Activated CD4-positive, alpha-beta memory T cell treated with anti-CD3 and anti-CD28 coated beads for 36 hours (primary cell): ENCODE measurements at regions of chr18 and their contacts with region 1.

Region 1: DNA sequence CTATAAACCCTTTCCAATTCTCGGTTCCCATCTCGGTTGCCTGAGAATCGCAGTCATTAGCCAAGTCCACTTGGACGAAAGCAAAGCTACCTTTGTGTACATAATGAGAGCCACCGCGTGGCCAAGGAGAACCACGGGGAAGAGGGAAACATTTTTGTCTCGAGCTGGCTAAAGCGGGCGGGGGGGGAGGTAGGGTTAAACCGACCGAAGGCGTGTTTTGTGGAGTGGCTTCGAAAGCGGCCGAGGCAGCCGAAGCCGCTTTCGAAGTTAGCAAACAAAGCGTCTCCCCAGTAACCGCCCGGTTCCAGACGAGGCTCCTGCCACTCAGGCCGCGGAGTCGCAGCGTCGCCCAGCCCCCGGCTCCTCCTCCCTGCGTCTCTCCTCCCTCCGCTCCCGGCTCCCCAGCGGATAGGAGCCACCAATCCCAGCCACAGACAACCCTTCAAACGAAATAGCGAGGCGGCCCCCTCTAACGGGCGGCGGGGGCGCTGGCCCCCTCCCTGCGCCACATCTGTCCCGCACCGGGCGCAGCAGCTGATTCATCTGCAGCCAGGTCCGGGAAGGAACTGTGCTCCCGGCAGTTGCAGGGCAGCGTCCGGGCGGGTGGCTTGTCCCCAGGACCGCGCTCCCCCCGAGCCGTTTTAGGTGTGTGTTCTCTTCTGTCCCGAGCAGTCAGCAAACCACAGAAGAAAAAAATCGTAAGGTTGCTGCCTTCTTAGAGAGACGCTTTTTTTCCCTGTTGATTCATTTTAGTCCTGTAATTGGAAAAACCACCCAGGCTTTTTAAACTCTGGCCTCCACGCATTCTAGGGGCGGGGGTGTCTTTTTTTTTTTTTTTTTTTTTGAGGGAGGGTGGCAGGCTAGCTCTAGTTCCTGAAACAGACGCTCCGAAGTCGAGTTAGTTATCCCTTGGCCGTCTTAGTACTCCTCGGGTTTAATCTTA is 1.8 kb upstream of the TGIF1 start:
- DNase-seq: peak; percentile 93
- H3K4me3 Mint-ChIP-seq: peak overlapping the region; percentile 86
- H3K27ac Mint-ChIP-seq: peak overlapping the region; percentile 93
- H3K4me1 Mint-ChIP-seq: peaks cover 25% of the 10 kb centered on the region
- H3K27me3 Mint-ChIP-seq: no peaks in the 10 kb centered on the region

Region 2: DNA sequence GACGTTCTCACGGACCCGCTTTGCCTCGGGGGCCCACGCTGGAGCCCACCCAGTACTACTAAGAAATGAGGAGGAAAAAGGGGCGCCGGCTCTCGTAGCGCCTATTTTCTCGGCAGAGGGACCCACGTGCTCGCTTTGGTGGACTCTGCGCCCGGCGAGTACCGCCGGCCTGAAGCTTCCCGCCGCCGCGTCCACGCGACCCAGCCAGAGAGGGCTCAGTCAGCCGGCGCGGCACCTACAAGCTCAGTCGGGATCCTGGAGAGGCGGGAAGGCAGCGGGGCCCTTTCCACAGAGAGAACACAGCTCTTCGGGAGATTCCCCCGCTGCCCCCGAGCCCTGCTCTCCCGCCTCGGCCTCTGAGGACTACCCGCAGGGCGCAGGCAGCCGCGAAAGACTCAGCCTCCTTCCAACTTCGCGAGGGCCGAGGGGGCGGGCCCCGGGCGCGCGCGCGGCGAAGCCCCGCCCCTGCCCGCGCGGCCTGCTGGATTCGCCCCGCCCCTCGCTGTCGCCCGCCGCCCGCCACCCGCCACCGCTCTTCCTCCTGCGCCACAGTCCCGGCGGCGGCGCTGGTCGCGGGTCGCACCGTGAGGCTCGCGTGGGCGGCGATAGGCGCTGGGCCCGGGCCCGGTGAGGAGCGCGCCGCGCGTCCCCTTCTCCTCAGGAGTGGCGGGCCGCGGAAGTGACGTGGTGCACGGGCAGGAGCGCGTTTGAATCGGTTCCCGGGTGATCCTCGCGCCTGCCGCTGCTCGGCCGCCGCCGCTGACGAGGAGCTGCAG is 792.8 kb before region 1 on chr18 and contains the start of gene SMCHD1:
- CTCF ChIA-PET with region 1: no interaction called
- POLR2A ChIA-PET with region 1: no interaction called
- intact Hi-C with region 1: loop called (anchors 5 kb)
- DNase-seq: peak; percentile 94
- H3K4me3 Mint-ChIP-seq: peak within 1 kb of the TSS; percentile 91
- H3K27ac Mint-ChIP-seq: peak within 1 kb of the TSS; percentile 97
- H3K4me1 Mint-ChIP-seq: peaks cover 29% of the 10 kb centered on the region
- H3K27me3 Mint-ChIP-seq: no peaks in the 10 kb centered on the region
- total RNA-seq, gene SMCHD1: 86.0 to 94.5 TPM

Region 3: GRCh38 chr18:3261371-3262246 is 186.6 kb before region 1 on chr18 and contains the start of gene MYL12B:
- CTCF ChIA-PET with region 1: interaction called, 3 read pairs
- POLR2A ChIA-PET with region 1: no interaction called
- intact Hi-C with region 1: loop called (anchors 1 kb)
- DNase-seq: peak; percentile 85
- H3K4me3 Mint-ChIP-seq: peak within 1 kb of the TSS; percentile 89
- H3K27ac Mint-ChIP-seq: peak within 1 kb of the TSS; percentile 95
- H3K4me1 Mint-ChIP-seq: peaks cover 62% of the 10 kb centered on the region
- H3K27me3 Mint-ChIP-seq: no peaks in the 10 kb centered on the region
- total RNA-seq, gene MYL12B: 335 to 339 TPM

Region 4: GRCh38 chr18:3380384-3380961 is 67.7 kb before region 1 on chr18:
- CTCF ChIA-PET with region 1: interaction called, 33 read pairs
- POLR2A ChIA-PET with region 1: interaction called, 4 read pairs
- intact Hi-C with region 1: loop called (anchors 1 kb)
- DNase-seq: peak; percentile 57
- H3K4me3 Mint-ChIP-seq: no peak overlapping the region
- H3K27ac Mint-ChIP-seq: no peak overlapping the region
- H3K4me1 Mint-ChIP-seq: peaks cover 9% of the 10 kb centered on the region
- H3K27me3 Mint-ChIP-seq: peaks cover 13% of the 10 kb centered on the region

Region 5: GRCh38 chr18:3541549-3542386 is 93.6 kb after region 1 on chr18:
- CTCF ChIA-PET with region 1: no interaction called
- POLR2A ChIA-PET with region 1: interaction called, 4 read pairs
- intact Hi-C with region 1: loop called (anchors 2 kb)
- DNase-seq: peak; percentile 68
- H3K4me3 Mint-ChIP-seq: peak overlapping the region; percentile 8
- H3K27ac Mint-ChIP-seq: peak overlapping the region; percentile 59
- H3K4me1 Mint-ChIP-seq: peaks cover 35% of the 10 kb centered on the region
- H3K27me3 Mint-ChIP-seq: no peaks in the 10 kb centered on the region

Region 6: DNA sequence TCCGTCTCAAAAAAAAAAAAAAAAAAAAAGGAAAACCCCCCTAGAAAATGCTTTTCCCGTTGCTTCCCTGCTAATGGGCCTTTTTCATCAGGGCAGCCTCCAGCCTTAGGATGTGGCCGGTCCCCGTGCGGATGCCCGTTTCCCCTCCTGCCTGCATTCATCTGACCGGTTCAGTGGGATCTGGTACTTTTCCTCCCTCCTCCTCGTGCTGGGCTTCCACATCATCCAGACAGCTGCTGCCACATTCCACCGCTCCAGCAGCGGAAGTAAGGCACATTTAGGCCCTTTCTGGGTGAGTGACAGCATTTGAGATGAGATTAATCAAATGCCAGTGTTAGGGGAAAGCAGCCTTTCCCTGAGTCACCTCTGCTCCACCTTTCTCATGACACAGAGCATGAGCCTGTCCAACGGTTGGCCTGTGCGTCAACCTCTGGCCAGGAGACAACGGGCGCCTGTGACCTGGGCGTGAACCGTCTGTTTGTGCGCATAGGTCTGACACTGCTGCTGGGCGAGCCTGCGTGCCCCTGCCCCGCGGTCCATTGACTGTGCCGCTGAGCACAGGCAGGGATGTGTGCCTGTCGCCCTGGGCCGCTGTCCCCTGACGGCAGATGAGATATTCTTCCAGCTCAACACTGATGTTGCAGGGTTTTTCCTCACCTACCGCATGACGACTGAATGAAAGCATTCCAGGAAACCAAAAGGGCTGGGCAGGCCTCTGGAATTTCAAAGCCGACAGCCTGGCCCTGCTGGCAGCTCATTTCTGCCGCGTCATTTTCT is 175.8 kb after region 1 on chr18:
- CTCF ChIA-PET with region 1: no interaction called
- POLR2A ChIA-PET with region 1: no interaction called
- intact Hi-C with region 1: loop called (anchors 1 kb)
- DNase-seq: peak; percentile 64
- H3K4me3 Mint-ChIP-seq: peak overlapping the region; percentile 58
- H3K27ac Mint-ChIP-seq: peak overlapping the region; percentile 88
- H3K4me1 Mint-ChIP-seq: peaks cover 40% of the 10 kb centered on the region
- H3K27me3 Mint-ChIP-seq: no peaks in the 10 kb centered on the region